GM12878 (cell line): ENCODE measurements at regions of chr10 and their contacts with region 1.

Region 1: GRCh38 chr10:84214612-84215235 is 10.6 kb downstream of the LRIT2 start:
- DNase-seq: no peak
- ATAC-seq: peak; percentile 98
- H3K4me3 ChIP-seq: no peak overlapping the region
- H3K27ac ChIP-seq: no peak overlapping the region
- H3K4me1 ChIP-seq: no peaks in the 10 kb centered on the region
- H3K27me3 ChIP-seq: no peaks in the 10 kb centered on the region; a peak in 2 of 4 replicates
- CTCF ChIP-seq: peak; percentile 70 to 78 (median 76)
- EP300 ChIP-seq: no peak
- POLR2A ChIP-seq: no peak
- RAD21 ChIP-seq: peak; percentile 70

Region 2: DNA sequence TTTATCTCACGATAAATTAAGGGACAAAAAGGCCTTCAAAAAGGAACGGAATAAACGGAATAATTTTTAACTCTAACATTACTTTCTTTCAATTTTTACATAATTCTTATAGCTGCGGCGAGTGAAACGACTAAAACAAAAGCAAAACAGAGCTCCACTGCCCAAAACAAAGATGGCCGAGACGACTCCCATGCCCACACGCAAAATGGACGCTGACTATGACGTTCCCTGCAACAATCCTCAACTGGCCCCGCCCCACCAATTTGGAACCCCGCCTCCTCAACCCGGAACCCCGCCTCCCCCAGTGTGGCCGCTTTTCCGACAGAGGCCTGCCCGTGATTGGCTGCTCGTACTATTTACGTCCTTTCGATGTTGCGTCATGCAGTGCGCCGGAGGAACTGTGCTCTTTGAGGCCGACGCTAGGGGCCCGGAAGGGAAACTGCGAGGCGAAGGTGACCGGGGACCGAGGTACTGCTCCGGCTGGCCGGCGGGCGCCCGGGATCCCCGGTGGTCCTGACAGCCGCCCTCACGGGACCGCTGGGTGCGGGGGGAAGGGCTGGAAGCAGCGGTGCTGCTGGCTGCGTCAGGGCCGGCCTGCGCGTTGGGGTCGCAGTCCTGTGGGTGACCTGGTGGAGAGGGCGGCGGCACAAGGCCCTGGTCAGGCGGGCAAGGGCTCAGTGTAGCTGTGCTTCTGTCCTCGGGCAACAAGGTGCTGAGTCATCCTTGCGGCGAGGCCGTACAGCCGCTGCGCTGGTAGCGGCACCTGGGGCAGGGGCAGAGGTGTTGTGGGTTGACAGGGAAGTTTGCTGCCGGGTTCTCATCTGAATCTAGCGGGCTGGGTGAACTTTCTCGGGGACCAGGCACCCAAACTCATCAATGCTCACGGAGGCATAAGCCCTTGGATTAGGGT is 75.3 kb before region 1 on chr10 and contains the start of gene GHITM:
- CTCF ChIA-PET with region 1: interaction called, 11 read pairs
- POLR2A ChIA-PET with region 1: no interaction called
- RAD21 ChIA-PET with region 1: interaction called, 3 read pairs
- SMC1A ChIA-PET with region 1: no interaction called
- in situ Hi-C with region 1: loop called (anchors 10 kb)
- intact Hi-C with region 1: no loop called
- DNase-seq: peak; percentile 92
- ATAC-seq: peak; percentile 98
- H3K4me3 ChIP-seq: peak within 1 kb of the TSS; percentile 84
- H3K27ac ChIP-seq: peak within 1 kb of the TSS; percentile 88
- H3K4me1 ChIP-seq: no peaks in the 10 kb centered on the region
- H3K27me3 ChIP-seq: no peaks in the 10 kb centered on the region
- CTCF ChIP-seq: peak; percentile 21 to 39 (median 29); a peak in 4 of 6 replicates
- EP300 ChIP-seq: peak; percentile 19 to 34; a peak in 1 of 4 replicates
- POLR2A ChIP-seq: peak; percentile 93
- RAD21 ChIP-seq: no peak
- polyA plus RNA-seq, gene GHITM: 366 to 501 TPM

Region 3: GRCh38 chr10:84227810-84228209 is 13.1 kb after region 1 on chr10:
- CTCF ChIA-PET with region 1: interaction called, 10 read pairs
- POLR2A ChIA-PET with region 1: no interaction called
- RAD21 ChIA-PET with region 1: no interaction called
- SMC1A ChIA-PET with region 1: no interaction called
- in situ Hi-C with region 1: no loop called
- intact Hi-C with region 1: no loop called
- DNase-seq: no peak
- ATAC-seq: no peak
- H3K4me3 ChIP-seq: no peak overlapping the region
- H3K27ac ChIP-seq: no peak overlapping the region
- H3K4me1 ChIP-seq: no peaks in the 10 kb centered on the region
- H3K27me3 ChIP-seq: no peaks in the 10 kb centered on the region; a peak in 2 of 4 replicates
- CTCF ChIP-seq: no peak
- EP300 ChIP-seq: no peak
- POLR2A ChIP-seq: no peak
- RAD21 ChIP-seq: no peak

Region 4: DNA sequence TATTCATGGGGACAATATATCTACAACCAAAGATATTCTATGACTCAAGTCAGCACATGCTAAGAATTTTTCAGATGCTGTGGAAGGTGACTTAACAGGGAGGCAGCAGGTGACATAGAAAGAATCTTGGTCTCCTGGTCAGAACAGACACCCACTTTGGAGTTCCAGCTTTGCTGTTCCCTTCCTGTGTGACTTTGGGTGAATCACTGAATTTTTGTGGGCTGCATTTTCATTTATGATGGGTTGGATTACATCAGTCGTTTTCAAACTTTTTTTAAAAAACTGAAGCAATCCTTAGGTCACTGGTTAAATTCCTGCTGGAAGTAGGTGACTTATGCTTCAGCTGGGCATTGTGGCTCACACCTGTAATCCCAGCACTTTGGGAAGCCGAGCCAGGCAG is 55.0 kb after region 1 on chr10:
- CTCF ChIA-PET with region 1: no interaction called
- POLR2A ChIA-PET with region 1: no interaction called
- RAD21 ChIA-PET with region 1: no interaction called
- SMC1A ChIA-PET with region 1: no interaction called
- in situ Hi-C with region 1: no loop called
- intact Hi-C with region 1: no loop called
- DNase-seq: no peak
- ATAC-seq: no peak
- H3K4me3 ChIP-seq: no peak overlapping the region
- H3K27ac ChIP-seq: no peak overlapping the region
- H3K4me1 ChIP-seq: no peaks in the 10 kb centered on the region
- H3K27me3 ChIP-seq: peaks cover 0 to 2% of the 10 kb centered on the region in 2 experiments; a peak in 2 of 4 replicates
- CTCF ChIP-seq: no peak
- EP300 ChIP-seq: no peak
- POLR2A ChIP-seq: no peak
- RAD21 ChIP-seq: no peak